Activated naive CD4-positive, alpha-beta T cell treated with anti-CD3 and anti-CD28 coated beads for 36 hours (primary cell): ENCODE measurements at regions of chr4 and their contacts with region 1.

Region 1: DNA sequence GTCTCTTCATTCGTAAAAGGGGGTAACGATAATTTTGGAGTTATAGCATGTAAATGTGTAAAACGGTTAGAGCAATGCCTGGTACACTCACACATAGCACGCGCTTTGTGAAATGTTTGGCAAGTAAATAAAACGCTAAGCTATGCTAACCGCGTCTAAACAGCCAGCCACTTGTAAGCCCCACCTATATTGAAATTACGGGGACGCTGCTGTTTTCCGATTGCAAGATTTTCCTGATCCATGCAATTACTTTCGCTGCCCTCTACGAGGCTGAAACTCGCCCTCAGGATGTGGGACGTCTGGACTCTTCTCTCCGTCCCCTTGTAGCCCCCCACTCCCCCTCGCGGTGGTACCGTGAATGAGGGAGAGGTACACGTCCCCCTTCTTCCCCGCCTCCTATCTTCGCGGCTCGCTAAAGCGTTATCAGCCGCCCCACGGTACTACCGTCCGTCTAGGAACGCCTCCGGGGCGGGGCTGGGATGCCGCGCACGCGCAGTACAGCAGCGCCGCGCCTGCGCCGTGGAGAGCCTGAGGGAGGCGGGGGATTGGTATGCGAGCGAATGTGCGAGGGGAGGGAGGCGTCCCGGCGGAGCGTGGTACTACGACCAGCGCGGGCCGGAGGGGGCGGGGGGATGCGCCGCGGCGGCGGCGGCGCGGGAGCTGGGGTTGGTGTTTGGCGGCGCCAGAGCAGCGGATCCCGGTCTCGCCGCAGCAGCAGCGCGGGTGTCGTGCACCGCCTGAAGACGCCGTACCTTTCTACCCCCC is at the start of gene STIM2:
- DNase-seq: peak; percentile 97
- H3K4me3 Mint-ChIP-seq: peak within 1 kb of the TSS; percentile 94
- H3K27ac Mint-ChIP-seq: peak within 1 kb of the TSS; percentile 96
- H3K4me1 Mint-ChIP-seq: peaks cover 41% of the 10 kb centered on the region
- H3K27me3 Mint-ChIP-seq: no peaks in the 10 kb centered on the region
- total RNA-seq, gene STIM2: 40.5 to 43.1 TPM

Region 2: DNA sequence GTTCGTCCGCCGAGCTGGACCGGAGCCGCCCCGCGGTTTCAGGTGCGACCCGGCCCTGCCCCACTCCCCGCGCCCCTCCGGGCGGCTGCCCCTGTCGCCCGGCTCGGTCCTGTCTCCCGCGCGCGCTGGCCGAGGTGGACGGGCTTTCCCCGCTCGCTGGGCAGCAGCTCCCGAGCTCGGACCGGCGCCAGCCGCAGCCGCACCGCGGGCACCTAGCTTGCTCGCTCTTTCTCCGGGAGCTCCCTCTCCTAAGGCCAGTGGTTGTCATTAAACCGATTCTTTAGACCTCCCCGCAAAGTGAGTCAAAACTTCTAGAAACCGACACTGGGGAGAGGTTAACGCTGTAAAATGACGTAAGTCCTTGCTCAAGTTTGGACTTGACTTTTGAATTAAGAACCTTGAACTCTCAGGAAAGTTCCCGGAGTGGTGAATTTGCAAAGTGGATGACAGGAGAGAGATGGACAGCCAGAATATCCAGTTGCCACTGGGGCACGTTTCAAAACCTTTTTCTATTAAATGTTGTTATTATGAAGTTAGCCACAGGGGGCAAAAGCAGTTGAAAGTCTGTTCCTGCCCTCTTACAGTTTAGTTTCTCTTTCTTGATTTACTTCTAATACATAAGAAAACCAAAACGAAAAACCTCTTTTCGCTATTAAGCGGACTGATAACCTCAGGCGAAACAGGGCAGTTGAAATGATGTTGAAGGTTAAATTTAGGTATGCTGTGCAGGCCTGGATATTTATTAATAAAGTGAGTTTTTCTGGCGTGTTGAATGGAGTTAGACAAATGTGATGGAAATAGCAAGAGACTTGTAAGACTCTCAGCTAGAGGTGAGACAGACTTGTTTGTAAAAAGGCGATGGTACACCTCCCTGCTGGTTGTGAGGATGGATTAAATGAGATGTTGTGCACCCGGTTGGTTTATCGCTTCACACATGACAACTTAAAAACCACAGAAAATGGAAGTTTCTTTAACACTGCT is 1625.7 kb before region 1 on chr4:
- CTCF ChIA-PET with region 1: no interaction called
- intact Hi-C with region 1: loop called (anchors 2 kb)
- DNase-seq: peak; percentile 63
- H3K4me3 Mint-ChIP-seq: peak overlapping the region; percentile 92
- H3K27ac Mint-ChIP-seq: peak overlapping the region; percentile 91
- H3K4me1 Mint-ChIP-seq: peaks cover 40% of the 10 kb centered on the region
- H3K27me3 Mint-ChIP-seq: no peaks in the 10 kb centered on the region

Region 3: DNA sequence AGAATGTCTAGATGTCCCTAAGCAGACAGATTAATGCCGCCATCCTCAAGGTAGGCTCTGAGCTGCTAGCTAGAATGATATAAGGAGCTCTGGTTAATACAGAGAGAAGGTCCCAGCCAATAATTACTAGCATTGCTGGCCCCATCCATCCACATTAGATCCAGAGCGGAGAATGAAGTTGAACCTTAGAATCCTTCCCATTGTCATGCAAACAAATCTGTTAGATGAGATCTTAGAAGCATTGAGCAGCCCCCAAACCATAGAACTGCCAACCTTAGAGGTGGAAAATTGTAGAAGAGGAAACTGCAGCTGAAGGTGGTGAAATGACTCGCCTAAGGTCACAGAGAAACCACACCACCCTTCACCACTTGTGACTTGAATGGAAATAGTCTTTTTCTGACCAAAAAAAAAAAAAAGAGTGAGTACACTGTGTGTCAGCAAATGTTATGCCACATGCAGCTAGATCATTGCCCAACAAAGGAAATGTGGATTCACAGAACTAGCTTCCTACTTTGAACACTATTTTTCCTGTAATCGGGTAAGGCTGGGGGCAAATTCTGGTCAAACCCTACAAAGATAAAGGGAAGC is 784.2 kb before region 1 on chr4:
- CTCF ChIA-PET with region 1: no interaction called
- intact Hi-C with region 1: loop called (anchors 5 kb)
- DNase-seq: peak; percentile 80
- H3K4me3 Mint-ChIP-seq: no peak overlapping the region
- H3K27ac Mint-ChIP-seq: peak overlapping the region; percentile 85
- H3K4me1 Mint-ChIP-seq: peaks cover 81% of the 10 kb centered on the region
- H3K27me3 Mint-ChIP-seq: no peaks in the 10 kb centered on the region

Region 4: DNA sequence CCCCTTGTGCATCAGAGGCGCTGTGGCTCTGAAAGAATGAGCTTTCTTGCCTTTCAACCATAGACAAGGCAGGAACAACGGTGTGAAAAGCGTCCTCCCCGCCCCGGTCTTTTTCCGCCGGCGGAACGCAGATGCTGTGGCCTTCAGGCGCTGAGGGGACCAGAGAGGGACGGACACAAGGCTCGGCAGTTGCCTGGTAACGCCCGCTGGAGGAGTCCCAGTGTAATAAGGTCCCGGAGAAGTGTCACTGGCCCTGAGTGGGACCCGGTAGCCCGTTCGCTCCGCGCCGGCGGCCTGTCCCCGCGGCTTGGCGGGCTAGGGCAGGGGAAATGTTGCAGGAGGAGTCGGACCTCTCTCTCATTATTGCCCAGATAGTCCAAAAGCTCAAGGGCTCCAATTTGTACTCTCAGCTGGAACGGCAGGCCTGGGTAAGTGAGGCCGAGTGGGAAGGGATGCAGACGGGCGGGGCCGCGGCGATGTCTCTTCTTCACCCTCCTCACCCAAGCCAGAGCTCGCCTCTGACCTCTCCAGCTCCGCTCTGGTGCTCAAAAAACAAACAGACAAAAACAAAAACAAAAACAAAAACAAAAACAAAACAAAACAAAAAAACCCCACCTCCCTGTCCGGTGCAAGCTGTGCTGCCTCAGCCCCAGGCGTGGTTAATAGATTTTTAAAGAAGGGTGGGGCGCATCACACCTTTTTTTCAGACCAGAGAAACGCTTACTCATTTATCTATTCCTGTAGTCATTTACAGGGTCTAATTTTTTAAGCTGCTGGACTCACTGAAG is 276.3 kb before region 1 on chr4 and contains the start of gene TBC1D19:
- CTCF ChIA-PET with region 1: no interaction called
- intact Hi-C with region 1: loop called (anchors 1 kb)
- DNase-seq: peak; percentile 92
- H3K4me3 Mint-ChIP-seq: peak within 1 kb of the TSS; percentile 93
- H3K27ac Mint-ChIP-seq: peak within 1 kb of the TSS; percentile 92
- H3K4me1 Mint-ChIP-seq: peaks cover 32% of the 10 kb centered on the region
- H3K27me3 Mint-ChIP-seq: no peaks in the 10 kb centered on the region
- total RNA-seq, gene TBC1D19: 3.8 to 4.1 TPM

Region 5: GRCh38 chr4:26787461-26788340 is 72.6 kb before region 1 on chr4:
- CTCF ChIA-PET with region 1: no interaction called
- intact Hi-C with region 1: loop called (anchors 1 kb)
- DNase-seq: peak; percentile 77
- H3K4me3 Mint-ChIP-seq: no peak overlapping the region
- H3K27ac Mint-ChIP-seq: no peak overlapping the region
- H3K4me1 Mint-ChIP-seq: peaks cover 13% of the 10 kb centered on the region
- H3K27me3 Mint-ChIP-seq: peaks cover 2% of the 10 kb centered on the region

Region 6: GRCh38 chr4:26878794-26879391 is 18.6 kb after region 1 on chr4:
- CTCF ChIA-PET with region 1: interaction called, 3 read pairs
- intact Hi-C with region 1: loop called (anchors 1 kb)
- DNase-seq: no peak
- H3K4me3 Mint-ChIP-seq: peak overlapping the region; percentile 63
- H3K27ac Mint-ChIP-seq: peak overlapping the region; percentile 99
- H3K4me1 Mint-ChIP-seq: peaks cover 80% of the 10 kb centered on the region
- H3K27me3 Mint-ChIP-seq: no peaks in the 10 kb centered on the region

Region 7: DNA sequence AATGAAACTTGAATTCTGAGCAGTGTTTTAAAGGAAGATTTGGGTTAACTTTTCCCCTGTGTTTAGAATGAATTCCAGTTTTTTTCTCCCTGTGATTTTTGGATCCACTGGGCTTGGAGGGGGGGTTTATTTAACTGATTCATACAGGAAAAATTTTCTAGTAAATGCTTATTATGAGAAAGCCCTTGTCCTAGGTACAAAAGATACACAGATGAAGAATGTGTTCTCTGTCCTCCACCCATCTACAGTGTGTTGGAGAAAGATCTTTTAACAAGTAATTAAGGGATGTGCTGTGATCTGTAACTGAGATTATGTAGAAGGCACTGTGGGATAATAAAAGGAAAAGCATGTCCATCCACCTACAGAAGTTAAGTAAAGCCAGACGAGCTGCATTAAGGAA is 104.2 kb after region 1 on chr4:
- CTCF ChIA-PET with region 1: no interaction called
- intact Hi-C with region 1: loop called (anchors 1 kb)
- DNase-seq: no peak
- H3K4me3 Mint-ChIP-seq: no peak overlapping the region
- H3K27ac Mint-ChIP-seq: no peak overlapping the region
- H3K4me1 Mint-ChIP-seq: peaks cover 46% of the 10 kb centered on the region
- H3K27me3 Mint-ChIP-seq: no peaks in the 10 kb centered on the region